ENCODE measurements at regions of chr14 and their contacts with region 1.

Region 1: DNA sequence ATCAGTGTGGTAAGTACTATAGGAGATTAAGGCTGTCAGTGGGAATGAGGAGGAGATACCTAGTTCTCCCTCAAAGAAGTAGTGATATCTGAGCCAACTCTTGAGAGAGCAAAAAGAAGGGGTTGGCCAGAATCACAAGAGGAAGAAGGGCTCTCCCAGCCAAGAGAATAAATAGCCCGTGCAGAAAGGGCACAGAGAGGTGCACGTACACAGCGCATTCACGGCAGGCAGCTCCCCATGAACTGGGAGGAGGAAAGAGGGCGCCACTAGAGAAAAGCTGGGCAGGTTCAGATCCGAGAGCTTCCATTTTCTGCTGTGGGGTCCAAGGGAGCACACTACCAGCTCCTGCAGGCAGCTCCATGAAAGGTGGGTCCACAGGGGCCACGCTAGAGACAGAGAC is 59.9 kb downstream of the PPP2R5E start:
- DNase-seq: no peak
- H3K4me3 ChIP-seq: no peak overlapping the region
- H3K27ac ChIP-seq: no peak overlapping the region
- H3K4me1 ChIP-seq: no peaks in the 10 kb centered on the region
- H3K27me3 ChIP-seq: no peaks in the 10 kb centered on the region
- CTCF ChIP-seq: no peak
- POLR2A ChIP-seq: no peak

Region 2: DNA sequence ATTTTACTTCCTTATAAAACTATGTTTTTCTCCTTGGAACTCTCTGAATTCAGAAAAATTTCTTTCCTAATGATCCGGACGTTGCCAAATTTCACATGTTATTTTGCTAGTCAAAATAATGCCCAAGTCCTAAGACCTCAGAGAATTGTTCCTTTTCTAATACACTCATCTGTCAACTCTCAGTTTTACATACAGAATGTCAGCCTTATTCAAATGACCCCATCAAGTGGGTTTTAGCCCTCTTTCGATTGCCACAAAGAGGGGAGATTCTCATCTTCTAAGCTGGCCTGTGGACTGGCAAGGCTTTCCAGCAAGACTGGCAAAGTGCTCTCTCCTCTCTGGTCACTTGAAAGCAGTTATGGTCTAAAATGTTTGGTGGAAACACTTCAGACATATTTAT is 65.3 kb before region 1 on chr14:
- intact Hi-C with region 1: loop called (anchors 2 kb)
- DNase-seq: no peak
- H3K4me3 ChIP-seq: no peak overlapping the region
- H3K27ac ChIP-seq: no peak overlapping the region
- H3K4me1 ChIP-seq: no peaks in the 10 kb centered on the region
- H3K27me3 ChIP-seq: no peaks in the 10 kb centered on the region
- CTCF ChIP-seq: no peak
- POLR2A ChIP-seq: no peak

Measured in breast epithelium (tissue), 4 donors.